GM12878 (cell line): ENCODE measurements at regions of chr12 and their contacts with region 1.

Region 1: GRCh38 chr12:56751712-56752598 is at the start of gene PRIM1:
- DNase-seq: peak; percentile 54
- ATAC-seq: peak; percentile 87
- H3K4me3 ChIP-seq: peak within 1 kb of the TSS; percentile 82
- H3K27ac ChIP-seq: peak within 1 kb of the TSS; percentile 72
- H3K4me1 ChIP-seq: peaks cover 21% of the 10 kb centered on the region
- H3K27me3 ChIP-seq: no peaks in the 10 kb centered on the region
- CTCF ChIP-seq: no peak
- EP300 ChIP-seq: no peak
- POLR2A ChIP-seq: peak; percentile 82
- RAD21 ChIP-seq: no peak
- polyA plus RNA-seq, gene PRIM1: 54.0 to 70.6 TPM

Region 2: DNA sequence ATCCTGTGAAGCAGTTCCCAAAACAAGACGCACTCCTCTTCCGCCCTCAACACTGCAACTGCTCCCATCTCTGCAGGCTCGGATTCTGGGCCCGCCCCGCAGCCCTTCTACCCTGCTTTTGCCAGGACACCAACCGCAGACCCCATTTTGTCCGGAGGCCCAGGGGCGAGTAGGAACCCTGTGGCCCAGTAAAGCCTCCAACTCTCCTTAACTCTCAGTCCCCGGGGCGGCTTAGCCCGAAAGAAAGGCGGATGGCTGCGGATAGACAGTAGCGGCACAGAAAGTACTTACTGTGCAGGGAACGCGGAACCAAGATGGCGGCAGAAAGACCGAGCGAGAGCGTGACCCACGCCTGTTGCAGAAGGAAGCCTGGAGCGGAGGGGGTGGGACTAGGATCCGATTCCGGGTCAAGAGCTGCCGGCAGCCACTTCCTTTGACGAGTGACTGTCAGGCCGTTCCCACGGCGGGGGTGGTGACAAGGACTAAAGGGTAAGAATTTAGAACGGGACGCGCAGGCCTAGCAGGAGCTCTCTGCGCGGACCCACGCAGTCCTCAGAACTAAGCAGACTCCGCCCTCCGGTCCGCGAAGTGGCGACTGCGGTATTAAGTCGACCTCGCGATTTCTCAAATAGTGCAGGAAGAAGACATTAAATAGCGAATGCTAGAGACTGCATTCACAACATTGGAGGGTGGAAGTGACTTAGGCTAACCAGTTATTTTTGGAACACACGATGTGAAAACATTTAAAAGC is 26.8 kb before region 1 on chr12 and contains the start of gene NACA:
- CTCF ChIA-PET with region 1: no interaction called
- POLR2A ChIA-PET with region 1: interaction called, 13 read pairs
- RAD21 ChIA-PET with region 1: interaction called, 8 read pairs
- SMC1A ChIA-PET with region 1: interaction called, 10 read pairs
- in situ Hi-C with region 1: no loop called
- intact Hi-C with region 1: loop called (anchors 1 kb)
- DNase-seq: peak; percentile 91
- ATAC-seq: peak; percentile 95
- H3K4me3 ChIP-seq: peak within 1 kb of the TSS; percentile 97
- H3K27ac ChIP-seq: peak within 1 kb of the TSS; percentile 93
- H3K4me1 ChIP-seq: peaks cover 28% of the 10 kb centered on the region
- H3K27me3 ChIP-seq: no peaks in the 10 kb centered on the region
- CTCF ChIP-seq: no peak
- EP300 ChIP-seq: no peak
- POLR2A ChIP-seq: peak; percentile 100
- RAD21 ChIP-seq: no peak
- polyA plus RNA-seq, gene NACA: 2,263 to 2,782 TPM

Region 3: GRCh38 chr12:56766535-56766934 is 14.6 kb after region 1 on chr12:
- CTCF ChIA-PET with region 1: interaction called, 10 read pairs
- POLR2A ChIA-PET with region 1: interaction called, 11 read pairs
- RAD21 ChIA-PET with region 1: no interaction called
- SMC1A ChIA-PET with region 1: interaction called, 4 read pairs
- in situ Hi-C with region 1: no loop called
- intact Hi-C with region 1: no loop called
- DNase-seq: peak; percentile 70
- ATAC-seq: peak; percentile 99
- H3K4me3 ChIP-seq: no peak overlapping the region
- H3K27ac ChIP-seq: no peak overlapping the region; the same call in 1 of the 2 replicates
- H3K4me1 ChIP-seq: peaks cover 12% of the 10 kb centered on the region
- H3K27me3 ChIP-seq: no peaks in the 10 kb centered on the region
- CTCF ChIP-seq: no peak
- EP300 ChIP-seq: peak in 1 of 2 experiments; percentile 82; a peak in 2 of 4 replicates
- POLR2A ChIP-seq: no peak
- RAD21 ChIP-seq: no peak

Region 4: DNA sequence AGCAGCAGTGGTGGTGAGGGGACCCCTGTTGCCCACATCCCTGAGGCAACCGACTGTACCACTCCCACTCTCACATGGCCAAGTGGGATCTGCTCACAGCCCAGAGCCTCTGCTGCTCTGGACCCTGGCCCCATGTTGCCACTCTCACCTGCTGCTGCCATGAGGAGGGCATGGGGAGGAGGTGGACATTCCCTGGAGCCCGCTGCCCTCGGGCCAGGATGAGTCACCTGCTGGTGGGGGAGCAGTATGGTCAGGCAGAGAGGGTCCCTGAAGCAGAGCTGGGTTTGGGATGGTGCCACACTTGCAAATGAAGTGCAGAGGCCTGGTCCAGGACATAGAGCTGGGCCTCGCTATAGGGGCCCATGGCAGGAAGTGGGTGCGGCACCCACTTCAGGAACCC is 156.2 kb after region 1 on chr12:
- CTCF ChIA-PET with region 1: no interaction called
- POLR2A ChIA-PET with region 1: no interaction called
- RAD21 ChIA-PET with region 1: no interaction called
- SMC1A ChIA-PET with region 1: no interaction called
- in situ Hi-C with region 1: no loop called
- intact Hi-C with region 1: no loop called
- DNase-seq: no peak
- ATAC-seq: no peak
- H3K4me3 ChIP-seq: no peak overlapping the region
- H3K27ac ChIP-seq: no peak overlapping the region
- H3K4me1 ChIP-seq: no peaks in the 10 kb centered on the region
- H3K27me3 ChIP-seq: no peaks in the 10 kb centered on the region; a peak in 1 of 4 replicates
- CTCF ChIP-seq: no peak
- EP300 ChIP-seq: no peak
- POLR2A ChIP-seq: no peak
- RAD21 ChIP-seq: no peak

Region 5: DNA sequence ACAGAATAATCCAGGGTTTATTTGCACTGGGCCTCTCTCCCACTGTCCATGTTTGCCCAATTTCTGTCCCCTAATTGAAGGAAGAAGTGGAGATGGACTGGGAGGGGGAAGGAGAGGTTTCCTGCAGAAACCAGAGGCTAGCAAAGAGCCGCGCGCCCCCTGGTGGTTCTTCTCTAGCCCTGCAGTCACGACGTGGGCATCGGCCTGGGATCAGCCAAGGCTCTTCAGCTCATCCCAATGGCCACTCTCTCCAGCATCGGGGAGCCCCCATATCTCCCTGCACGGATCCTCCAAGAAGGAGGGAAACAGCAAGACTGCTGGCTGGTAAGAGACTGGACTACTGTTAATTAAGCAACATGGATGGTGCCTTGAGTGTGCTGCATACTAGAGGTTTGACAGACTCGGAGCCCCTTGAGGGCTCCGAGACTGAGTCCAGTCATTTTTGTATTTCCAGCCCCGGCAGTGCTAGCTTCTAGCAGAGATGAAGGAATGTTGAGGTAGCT is 235.6 kb after region 1 on chr12:
- CTCF ChIA-PET with region 1: interaction called, 45 read pairs
- POLR2A ChIA-PET with region 1: interaction called, 3 read pairs
- RAD21 ChIA-PET with region 1: interaction called, 14 read pairs
- SMC1A ChIA-PET with region 1: interaction called, 30 read pairs
- in situ Hi-C with region 1: no loop called
- intact Hi-C with region 1: loop called (anchors 1 kb)
- DNase-seq: no peak
- ATAC-seq: peak; percentile 90
- H3K4me3 ChIP-seq: no peak overlapping the region
- H3K27ac ChIP-seq: no peak overlapping the region
- H3K4me1 ChIP-seq: peaks cover 18% of the 10 kb centered on the region
- H3K27me3 ChIP-seq: no peaks in the 10 kb centered on the region
- CTCF ChIP-seq: peak; percentile 93 to 97 (median 96)
- EP300 ChIP-seq: no peak
- POLR2A ChIP-seq: no peak
- RAD21 ChIP-seq: peak; percentile 88

Region 6: DNA sequence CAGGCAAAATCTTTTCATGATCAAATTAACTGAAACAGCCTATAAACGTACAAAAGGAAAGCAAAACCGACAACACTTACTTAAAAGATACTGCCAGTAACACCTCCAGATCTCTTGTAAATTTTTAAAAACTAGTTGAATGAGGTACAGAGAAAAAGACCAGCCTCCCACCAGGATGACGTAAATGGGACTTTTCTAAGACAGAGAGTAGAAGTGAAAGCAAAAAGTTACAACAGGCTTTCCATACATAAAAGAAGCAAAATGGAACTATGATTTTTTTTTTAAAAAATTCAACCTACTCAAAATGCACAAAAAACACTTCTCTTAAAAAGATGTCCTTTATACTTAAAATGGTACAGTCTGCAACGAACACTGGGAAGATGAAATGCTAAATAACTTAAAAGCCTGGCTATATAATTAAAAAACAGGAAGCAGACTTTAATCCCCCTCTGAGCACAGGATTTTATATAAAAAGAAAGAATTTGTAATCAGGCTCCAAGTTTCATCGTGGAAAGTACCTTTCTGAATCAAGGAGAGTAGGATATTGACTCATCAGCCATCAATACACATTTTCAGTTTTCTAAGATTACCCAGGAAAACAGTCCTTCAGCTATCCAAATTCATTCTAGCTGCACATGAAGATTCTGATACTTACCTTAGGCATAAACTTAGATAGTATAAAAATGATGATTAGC is 312.2 kb after region 1 on chr12:
- CTCF ChIA-PET with region 1: interaction called, 3 read pairs
- POLR2A ChIA-PET with region 1: interaction called, 3 read pairs
- RAD21 ChIA-PET with region 1: no interaction called
- SMC1A ChIA-PET with region 1: no interaction called
- in situ Hi-C with region 1: no loop called
- intact Hi-C with region 1: loop called (anchors 5 kb)
- DNase-seq: peak; percentile 69
- ATAC-seq: peak; percentile 96
- H3K4me3 ChIP-seq: peak overlapping the region; percentile 48; the same call in 1 of the 2 replicates
- H3K27ac ChIP-seq: peak overlapping the region; percentile 59
- H3K4me1 ChIP-seq: peaks cover 10% of the 10 kb centered on the region
- H3K27me3 ChIP-seq: no peaks in the 10 kb centered on the region
- CTCF ChIP-seq: no peak
- EP300 ChIP-seq: no peak
- POLR2A ChIP-seq: no peak
- RAD21 ChIP-seq: no peak